ENCODE measurements at regions of chrX and their contacts with region 1.

Region 1: GRCh38 chrX:41923257-41923969 is at the start of gene CASK:
- DNase-seq: peak; percentile 82 to 91
- ATAC-seq: peak; percentile 76 to 85
- H3K4me3 ChIP-seq: peak within 1 kb of the TSS; percentile 63 to 71 (median 66)
- H3K27ac ChIP-seq: peak within 1 kb of the TSS; percentile 76 to 87 (median 85)
- H3K4me1 ChIP-seq: peaks cover 9% of the 10 kb centered on the region in 2 donors
- H3K27me3 ChIP-seq: peaks cover 0 to 3% (median 0%) of the 10 kb centered on the region in 3 donors
- CTCF ChIP-seq: peak in 1 of 5 experiments; percentile 7
- POLR2A ChIP-seq: peak; percentile 89 to 96
- total RNA-seq, gene CASK: 7.3 to 14.3 (median 10.0) TPM

Region 2: DNA sequence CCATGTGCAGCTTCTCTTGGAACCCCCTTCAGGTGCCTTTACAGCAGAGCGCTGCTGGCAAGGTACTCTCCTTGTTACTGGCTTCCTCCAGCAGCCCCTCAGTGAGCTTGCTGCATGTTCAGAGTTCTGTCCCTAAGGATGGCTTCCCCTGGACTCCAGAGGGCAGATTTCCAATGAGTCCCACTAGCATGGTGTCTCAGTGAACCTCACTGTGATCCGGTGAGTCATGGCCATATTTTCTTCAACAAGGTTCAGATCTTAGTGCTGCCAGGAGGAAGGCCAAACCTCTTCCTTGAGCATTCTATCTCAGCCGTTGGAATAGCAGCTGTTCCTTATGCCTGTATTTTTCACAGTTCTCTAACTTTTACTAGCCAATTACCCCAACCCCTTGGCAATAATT is 98.9 kb before region 1 on chrX:
- in situ Hi-C with region 1: no loop called
- intact Hi-C with region 1: loop called (anchors 10 kb)
- DNase-seq: no peak
- ATAC-seq: peak; percentile 54 to 60
- H3K4me3 ChIP-seq: no peak overlapping the region
- H3K27ac ChIP-seq: no peak overlapping the region
- H3K4me1 ChIP-seq: peaks cover 7 to 37% of the 10 kb centered on the region in 2 donors
- H3K27me3 ChIP-seq: no peaks in the 10 kb centered on the region
- CTCF ChIP-seq: no peak
- POLR2A ChIP-seq: no peak

Region 3: GRCh38 chrX:41981481-41982018 is 58.1 kb after region 1 on chrX:
- in situ Hi-C with region 1: no loop called
- intact Hi-C with region 1: no loop called
- DNase-seq: no peak
- ATAC-seq: no peak
- H3K4me3 ChIP-seq: no peak overlapping the region
- H3K27ac ChIP-seq: no peak overlapping the region
- H3K4me1 ChIP-seq: no peaks in the 10 kb centered on the region
- H3K27me3 ChIP-seq: no peaks in the 10 kb centered on the region
- CTCF ChIP-seq: no peak
- POLR2A ChIP-seq: no peak

Region 4: GRCh38 chrX:42020225-42020624 is 96.8 kb after region 1 on chrX:
- in situ Hi-C with region 1: loop called in 1 of 4 experiments (anchors 25 kb)
- intact Hi-C with region 1: no loop called
- DNase-seq: no peak
- ATAC-seq: no peak
- H3K4me3 ChIP-seq: no peak overlapping the region
- H3K27ac ChIP-seq: no peak overlapping the region
- H3K4me1 ChIP-seq: no peaks in the 10 kb centered on the region
- H3K27me3 ChIP-seq: no peaks in the 10 kb centered on the region
- CTCF ChIP-seq: no peak
- POLR2A ChIP-seq: no peak

Measured in gastrocnemius medialis (tissue), 4 donors.